HEK293 (cell line): ENCODE measurements at regions of chr19 and their contacts with region 1.

Region 1: GRCh38 chr19:34926685-34927375 is at the start of gene ZNF30:
- H3K4me3 ChIP-seq: peak within 1 kb of the TSS; percentile 51
- H3K27ac ChIP-seq: peak within 1 kb of the TSS; percentile 95
- H3K4me1 ChIP-seq: peaks cover 10% of the 10 kb centered on the region
- CTCF ChIP-seq: 0 out of 2 replicates have a peak, but pooled peaks have one; percentile 45

Region 2: DNA sequence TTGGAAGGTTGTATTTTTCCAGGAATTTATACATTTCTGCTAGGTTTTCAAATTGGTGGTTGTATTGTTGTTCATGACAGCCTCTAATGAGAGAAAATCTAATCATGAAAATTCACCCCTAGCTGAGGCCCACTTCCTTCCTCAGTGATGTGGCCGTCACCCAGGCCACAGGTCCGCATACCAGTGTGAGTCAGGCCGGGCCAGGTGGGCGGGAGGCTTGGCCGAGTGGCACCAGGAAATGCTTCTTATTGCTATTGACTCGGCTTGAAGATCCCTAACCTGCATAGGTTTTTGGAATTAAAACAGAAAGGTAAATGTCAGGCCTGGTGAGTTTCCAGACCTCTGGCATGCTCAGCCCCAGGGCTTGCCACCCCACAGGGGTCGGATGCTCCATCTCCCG is 338.6 kb before region 1 on chr19:
- CTCF ChIA-PET with region 1: no interaction called
- POLR2A ChIA-PET with region 1: no interaction called
- H3K4me3 ChIP-seq: no peak overlapping the region
- H3K27ac ChIP-seq: no peak overlapping the region
- H3K4me1 ChIP-seq: no peaks in the 10 kb centered on the region
- CTCF ChIP-seq: no peak

Region 3: DNA sequence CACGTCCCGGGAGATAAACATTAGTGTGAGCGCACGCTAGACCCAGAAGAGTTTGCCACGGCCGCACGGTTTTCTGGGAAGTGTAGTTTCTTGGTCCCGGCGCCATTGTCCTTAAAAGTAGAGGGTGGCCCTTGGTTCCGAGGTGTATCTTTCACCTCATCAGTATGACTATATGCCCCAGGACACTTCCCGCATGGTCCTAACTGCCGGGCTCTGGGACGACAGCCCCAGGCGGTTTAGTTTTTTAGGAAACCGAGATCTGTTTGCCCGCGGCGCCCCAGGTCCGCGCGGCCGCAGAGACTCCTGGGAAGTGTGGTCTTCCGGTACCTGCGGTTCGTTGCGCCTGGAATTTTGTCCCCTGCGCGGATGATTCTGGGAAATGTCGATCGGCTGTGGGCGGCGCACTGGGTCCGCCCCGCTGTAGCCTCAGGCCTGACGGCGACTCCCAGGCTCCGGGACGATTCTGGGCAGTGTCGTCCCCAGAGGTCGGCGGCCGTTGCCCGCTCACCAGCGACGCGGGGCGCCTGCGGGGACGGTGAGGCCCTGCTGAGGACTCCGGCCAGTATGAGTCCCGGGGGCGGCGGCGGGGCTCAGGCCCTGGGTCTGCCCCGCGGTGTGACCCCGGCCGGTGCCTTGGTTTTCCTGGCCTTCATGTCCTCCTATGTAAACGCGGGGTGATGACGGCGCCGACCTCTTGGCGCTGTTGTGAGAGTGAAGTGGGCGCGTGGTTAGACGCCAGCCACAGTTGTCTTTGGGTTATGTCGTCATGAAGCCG is 192.8 kb before region 1 on chr19 and contains the start of gene ZNF181:
- CTCF ChIA-PET with region 1: no interaction called
- POLR2A ChIA-PET with region 1: interaction called, 12 read pairs
- H3K4me3 ChIP-seq: peak within 1 kb of the TSS; percentile 68
- H3K27ac ChIP-seq: peak within 1 kb of the TSS; percentile 96
- H3K4me1 ChIP-seq: peaks cover 14% of the 10 kb centered on the region
- CTCF ChIP-seq: peak; percentile 95

Region 4: GRCh38 chr19:34910770-34911169 is 16.1 kb before region 1 on chr19:
- CTCF ChIA-PET with region 1: no interaction called
- POLR2A ChIA-PET with region 1: interaction called, 10 read pairs
- H3K4me3 ChIP-seq: no peak overlapping the region
- H3K27ac ChIP-seq: no peak overlapping the region
- H3K4me1 ChIP-seq: no peaks in the 10 kb centered on the region
- CTCF ChIP-seq: no peak

Region 5: GRCh38 chr19:34943861-34944573 is 17.2 kb after region 1 on chr19:
- CTCF ChIA-PET with region 1: interaction called, 3 read pairs
- POLR2A ChIA-PET with region 1: interaction called, 10 read pairs
- H3K4me3 ChIP-seq: no peak overlapping the region
- H3K27ac ChIP-seq: no peak overlapping the region
- H3K4me1 ChIP-seq: no peaks in the 10 kb centered on the region
- CTCF ChIP-seq: no peak